ENCODE measurements at regions of chr22 and their contacts with region 1.

Region 1: DNA sequence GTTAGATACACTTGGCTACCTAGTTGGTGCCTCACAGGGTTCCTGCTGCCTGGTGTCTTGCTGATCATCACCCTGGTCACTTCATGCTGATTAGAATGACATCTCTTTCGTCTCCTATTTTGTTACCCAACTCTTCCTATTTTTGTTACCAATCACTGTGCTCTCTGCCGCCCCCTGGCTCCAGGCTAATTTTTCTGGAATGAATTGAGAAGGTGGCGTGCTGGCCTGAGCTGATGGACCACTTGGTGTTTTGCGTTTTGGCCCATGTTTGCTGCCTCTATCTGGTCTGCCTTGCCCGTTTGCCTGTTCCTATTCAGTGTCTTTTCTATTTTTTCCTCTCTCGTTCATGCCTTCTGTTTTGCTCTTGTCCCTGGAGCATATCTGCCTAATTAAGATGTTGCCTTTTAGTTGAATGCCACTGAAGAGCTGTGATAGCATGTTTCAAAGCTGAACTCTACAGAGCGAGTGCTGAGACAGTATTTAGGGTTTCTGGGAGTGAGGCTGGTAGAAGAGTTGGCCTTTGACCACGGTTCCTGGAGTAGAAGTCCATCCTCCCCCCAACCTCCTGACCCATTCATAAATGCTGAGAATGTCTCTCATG is 5.9 kb upstream of the ATF4 start:
- DNase-seq: peak in 6 of 9 experiments; percentile 36 to 61 (median 54)
- ATAC-seq: peak; percentile 55
- H3K4me3 ChIP-seq: no peak overlapping the region
- H3K4me3 Mint-ChIP-seq: no peak overlapping the region
- H3K27ac ChIP-seq: no peak overlapping the region
- H3K27ac Mint-ChIP-seq: no peak overlapping the region
- H3K4me1 ChIP-seq: peaks cover 8% of the 10 kb centered on the region
- H3K4me1 Mint-ChIP-seq: peaks cover 20% of the 10 kb centered on the region
- H3K27me3 ChIP-seq: no peaks in the 10 kb centered on the region
- H3K27me3 Mint-ChIP-seq: no peaks in the 10 kb centered on the region
- CTCF ChIP-seq: peak; percentile 67

Region 2: DNA sequence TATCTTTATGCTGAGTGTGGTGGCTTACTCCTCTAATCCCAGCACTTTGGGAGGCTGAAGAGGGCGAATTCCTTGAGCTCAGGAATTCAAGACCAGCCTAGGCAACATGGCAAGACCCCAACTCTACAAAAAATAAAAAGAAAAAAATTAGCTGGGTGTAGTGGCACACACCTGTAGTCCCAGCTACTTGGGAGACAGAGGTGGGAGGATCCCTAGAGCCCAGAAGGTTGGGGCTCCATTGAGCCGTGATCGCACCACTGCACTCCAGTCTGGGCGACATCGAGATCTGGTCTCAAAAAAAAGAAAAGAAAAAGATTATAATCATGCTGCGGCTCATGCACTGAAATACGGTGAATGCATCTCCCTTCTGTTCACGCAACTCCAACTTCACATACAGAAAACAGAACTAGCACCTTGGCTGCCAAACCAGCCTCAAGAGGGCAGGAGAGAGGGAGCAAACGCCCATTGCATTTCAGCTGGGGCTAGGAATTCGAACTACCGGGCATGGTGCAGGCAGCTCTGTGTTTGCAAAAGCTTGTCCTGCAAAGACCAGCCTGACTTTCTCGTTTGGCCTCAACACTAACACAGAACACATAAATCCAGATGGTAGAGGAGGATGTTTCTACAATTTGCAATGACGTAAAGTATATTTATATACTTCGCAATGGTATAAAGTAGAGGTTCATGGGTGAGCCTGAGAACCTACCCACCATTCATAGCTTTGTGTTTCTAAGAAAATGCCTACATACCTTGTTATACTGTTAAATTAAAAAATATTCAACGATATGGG is 171.0 kb before region 1 on chr22:
- CTCF ChIA-PET with region 1: interaction called, 7 read pairs
- POLR2A ChIA-PET with region 1: no interaction called
- intact Hi-C with region 1: loop called in 1 of 2 experiments (anchors 1 kb)
- DNase-seq: peak; percentile 32 to 76 (median 63)
- ATAC-seq: peak; percentile 91
- H3K4me3 ChIP-seq: no peak overlapping the region
- H3K4me3 Mint-ChIP-seq: no peak overlapping the region
- H3K27ac ChIP-seq: no peak overlapping the region
- H3K27ac Mint-ChIP-seq: no peak overlapping the region
- H3K4me1 ChIP-seq: no peaks in the 10 kb centered on the region
- H3K4me1 Mint-ChIP-seq: peaks cover 4% of the 10 kb centered on the region
- H3K27me3 ChIP-seq: no peaks in the 10 kb centered on the region
- H3K27me3 Mint-ChIP-seq: no peaks in the 10 kb centered on the region
- CTCF ChIP-seq: peak; percentile 60

Region 3: GRCh38 chr22:39502109-39502788 is 12.2 kb before region 1 on chr22 and contains the start of gene MIEF1:
- CTCF ChIA-PET with region 1: interaction called, 43 read pairs
- POLR2A ChIA-PET with region 1: interaction called, 20 read pairs
- intact Hi-C with region 1: no loop called
- DNase-seq: peak; percentile 67 to 96 (median 88)
- ATAC-seq: peak; percentile 94
- H3K4me3 ChIP-seq: peak within 1 kb of the TSS; percentile 66 to 80
- H3K4me3 Mint-ChIP-seq: peak within 1 kb of the TSS; percentile 97
- H3K27ac ChIP-seq: peak within 1 kb of the TSS; percentile 64 to 80
- H3K27ac Mint-ChIP-seq: peak within 1 kb of the TSS; percentile 92
- H3K4me1 ChIP-seq: peaks cover 30% of the 10 kb centered on the region
- H3K4me1 Mint-ChIP-seq: peaks cover 41% of the 10 kb centered on the region
- H3K27me3 ChIP-seq: no peaks in the 10 kb centered on the region
- H3K27me3 Mint-ChIP-seq: no peaks in the 10 kb centered on the region
- CTCF ChIP-seq: no peak
- total RNA-seq, gene MIEF1: 24.8 to 25.3 TPM